Activated CD8-positive, alpha-beta T cell treated with anti-CD3 and anti-CD28 coated beads, Interleukin-2, amount 10 ng/mL, durations not matched to agents 7 days and 5 days (primary cell): ENCODE measurements at regions of chr1 and their contacts with region 1.

Region 1: DNA sequence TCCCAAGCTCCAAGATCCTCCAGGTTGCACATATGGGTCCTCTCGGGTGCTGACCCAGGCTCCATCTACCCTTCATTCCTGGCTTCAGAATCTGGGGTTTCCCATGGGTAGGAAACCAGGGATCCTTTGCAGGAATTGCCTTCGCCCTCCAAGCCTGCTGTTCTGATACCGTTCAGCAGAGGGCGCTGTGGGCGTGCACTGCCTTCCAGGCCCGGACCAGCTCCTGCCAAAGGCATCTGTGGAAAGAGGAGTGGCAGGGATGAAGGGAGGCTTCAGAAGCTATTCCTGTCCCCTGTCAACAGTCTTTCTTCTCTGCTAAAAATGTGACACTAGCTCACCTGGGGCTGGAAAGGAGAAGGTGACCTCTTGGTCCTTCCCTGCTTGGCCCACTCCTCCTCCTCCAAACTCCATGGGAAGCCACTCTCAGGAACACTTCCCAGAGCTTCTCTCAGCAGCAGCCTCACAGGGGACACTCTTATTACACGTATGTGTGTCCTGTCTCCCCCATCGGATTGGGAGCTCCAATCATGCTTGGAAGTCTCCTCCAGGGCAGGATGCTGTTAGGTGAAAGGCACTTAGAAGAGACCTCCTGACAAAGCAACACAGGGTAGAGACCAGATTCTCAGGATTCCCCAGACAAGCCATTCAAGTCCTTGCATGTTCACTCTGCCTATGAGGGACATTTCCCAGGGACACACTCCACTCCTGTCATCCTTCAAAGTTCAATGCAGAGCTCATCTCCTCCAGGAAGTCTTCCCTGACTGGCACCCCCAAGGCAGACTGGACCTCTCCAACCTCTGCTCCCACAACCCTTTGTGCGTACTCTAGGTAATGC is 71.3 kb downstream of the VWA5B1 start:
- DNase-seq: peak; percentile 26
- ATAC-seq: no peak
- H3K4me3 Mint-ChIP-seq: no peak overlapping the region
- H3K27ac Mint-ChIP-seq: no peak overlapping the region
- H3K4me1 Mint-ChIP-seq: peaks cover 5% of the 10 kb centered on the region
- H3K27me3 Mint-ChIP-seq: peaks cover 56% of the 10 kb centered on the region

Region 2: GRCh38 chr1:20348326-20348915 is 13.6 kb before region 1 on chr1:
- CTCF ChIA-PET with region 1: interaction called, 10 read pairs
- POLR2A ChIA-PET with region 1: no interaction called
- DNase-seq: no peak
- ATAC-seq: no peak
- H3K4me3 Mint-ChIP-seq: no peak overlapping the region
- H3K27ac Mint-ChIP-seq: no peak overlapping the region
- H3K4me1 Mint-ChIP-seq: no peaks in the 10 kb centered on the region
- H3K27me3 Mint-ChIP-seq: peaks cover 17% of the 10 kb centered on the region